Posterior vena cava (tissue), 2 donors: ENCODE measurements at regions of chr5 and their contacts with region 1.

Region 1: GRCh38 chr5:50953290-50953689 is 286.9 kb downstream of the PARP8 start:
- DNase-seq: no peak

Region 2: GRCh38 chr5:50934343-50934742 is 18.9 kb before region 1 on chr5:
- intact Hi-C with region 1: loop called in 1 of 2 experiments (anchors 1 kb)
- DNase-seq: no peak